ENCODE measurements at regions of chr1 and their contacts with region 1.

Region 1: GRCh38 chr1:26538480-26539412 is 9.2 kb downstream of the RPS6KA1 start:
- H3K4me3 ChIP-seq: no peak overlapping the region
- H3K27ac ChIP-seq: no peak overlapping the region
- H3K4me1 ChIP-seq: no peaks in the 10 kb centered on the region
- CTCF ChIP-seq: peak; percentile 48; the same call in 1 of the 2 replicates

Region 2: DNA sequence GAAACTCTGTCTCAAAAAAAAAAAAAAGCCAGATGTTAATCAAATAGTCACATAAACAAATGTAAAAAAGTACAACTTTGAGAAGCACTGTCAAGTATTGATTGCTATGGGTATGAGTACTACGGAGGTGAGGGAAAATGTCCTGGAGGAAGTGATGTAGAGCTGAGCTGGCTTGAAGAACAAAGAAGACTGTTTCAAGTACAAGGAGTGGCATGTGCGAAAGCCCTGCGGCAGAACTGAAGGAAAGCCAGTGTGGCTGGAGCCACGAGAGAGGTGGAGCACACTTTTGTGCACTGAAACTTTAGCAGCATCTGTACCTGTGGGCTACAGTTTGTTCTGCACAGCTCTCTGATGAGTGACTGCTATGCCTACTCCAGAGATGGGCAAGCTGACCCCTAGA is 14.6 kb before region 1 on chr1:
- CTCF ChIA-PET with region 1: interaction called, 15 read pairs
- POLR2A ChIA-PET with region 1: no interaction called
- H3K4me3 ChIP-seq: no peak overlapping the region
- H3K27ac ChIP-seq: no peak overlapping the region
- H3K4me1 ChIP-seq: no peaks in the 10 kb centered on the region
- CTCF ChIP-seq: no peak

Region 3: GRCh38 chr1:26553942-26554682 is 15.4 kb after region 1 on chr1:
- CTCF ChIA-PET with region 1: interaction called, 37 read pairs
- POLR2A ChIA-PET with region 1: interaction called, 4 read pairs
- H3K4me3 ChIP-seq: no peak overlapping the region
- H3K27ac ChIP-seq: no peak overlapping the region
- H3K4me1 ChIP-seq: no peaks in the 10 kb centered on the region
- CTCF ChIP-seq: no peak

Region 4: GRCh38 chr1:26570287-26570686 is 31.5 kb after region 1 on chr1:
- CTCF ChIA-PET with region 1: interaction called, 14 read pairs
- POLR2A ChIA-PET with region 1: no interaction called
- H3K4me3 ChIP-seq: no peak overlapping the region
- H3K27ac ChIP-seq: no peak overlapping the region
- H3K4me1 ChIP-seq: no peaks in the 10 kb centered on the region
- CTCF ChIP-seq: no peak

Measured in HEK293 (cell line).